ENCODE measurements at regions of chr17 and their contacts with region 1.

Region 1: DNA sequence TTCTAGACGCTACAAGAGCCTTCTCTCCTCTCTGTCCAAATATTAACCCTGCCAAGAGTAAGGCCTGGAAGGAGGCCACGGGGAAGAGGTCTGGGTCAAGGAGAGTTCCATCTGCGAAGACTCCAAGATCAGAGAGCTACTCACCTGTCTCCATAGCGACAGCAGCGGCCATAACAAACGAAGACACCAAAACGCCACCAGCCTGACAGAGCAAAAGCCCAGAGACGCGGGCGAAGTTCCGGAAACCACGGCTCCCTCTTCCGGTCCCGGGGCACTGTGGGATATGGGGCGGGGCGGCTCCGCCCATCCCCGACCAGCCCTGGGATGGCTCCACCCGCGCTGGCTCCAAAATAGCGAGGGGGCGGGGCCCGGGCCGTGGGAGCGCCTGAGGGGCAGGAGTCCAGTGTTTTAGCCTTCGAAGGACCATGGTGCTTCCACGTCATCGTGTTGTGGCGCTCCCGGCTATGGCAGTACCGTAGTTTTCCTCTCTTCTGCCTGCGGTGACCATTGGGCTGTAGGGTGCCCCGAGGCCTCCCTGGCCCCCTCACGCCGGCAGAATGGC is at the starts of genes C17orf100 and MED31:
- DNase-seq: peak; percentile 96
- H3K4me3 Mint-ChIP-seq: peak within 1 kb of the TSS; percentile 91
- H3K27ac Mint-ChIP-seq: peak within 1 kb of the TSS; percentile 95
- H3K4me1 Mint-ChIP-seq: peaks cover 65% of the 10 kb centered on the region
- H3K27me3 Mint-ChIP-seq: no peaks in the 10 kb centered on the region
- total RNA-seq, gene C17orf100: 1.1 to 1.9 TPM
- total RNA-seq, gene MED31: 26.0 to 26.3 TPM

Region 2: GRCh38 chr17:6473128-6473767 is 178.2 kb before region 1 on chr17:
- CTCF ChIA-PET with region 1: interaction called, 18 read pairs
- POLR2A ChIA-PET with region 1: no interaction called
- DNase-seq: peak; percentile 69
- H3K4me3 Mint-ChIP-seq: no peak overlapping the region
- H3K27ac Mint-ChIP-seq: no peak overlapping the region
- H3K4me1 Mint-ChIP-seq: no peaks in the 10 kb centered on the region
- H3K27me3 Mint-ChIP-seq: no peaks in the 10 kb centered on the region

Region 3: DNA sequence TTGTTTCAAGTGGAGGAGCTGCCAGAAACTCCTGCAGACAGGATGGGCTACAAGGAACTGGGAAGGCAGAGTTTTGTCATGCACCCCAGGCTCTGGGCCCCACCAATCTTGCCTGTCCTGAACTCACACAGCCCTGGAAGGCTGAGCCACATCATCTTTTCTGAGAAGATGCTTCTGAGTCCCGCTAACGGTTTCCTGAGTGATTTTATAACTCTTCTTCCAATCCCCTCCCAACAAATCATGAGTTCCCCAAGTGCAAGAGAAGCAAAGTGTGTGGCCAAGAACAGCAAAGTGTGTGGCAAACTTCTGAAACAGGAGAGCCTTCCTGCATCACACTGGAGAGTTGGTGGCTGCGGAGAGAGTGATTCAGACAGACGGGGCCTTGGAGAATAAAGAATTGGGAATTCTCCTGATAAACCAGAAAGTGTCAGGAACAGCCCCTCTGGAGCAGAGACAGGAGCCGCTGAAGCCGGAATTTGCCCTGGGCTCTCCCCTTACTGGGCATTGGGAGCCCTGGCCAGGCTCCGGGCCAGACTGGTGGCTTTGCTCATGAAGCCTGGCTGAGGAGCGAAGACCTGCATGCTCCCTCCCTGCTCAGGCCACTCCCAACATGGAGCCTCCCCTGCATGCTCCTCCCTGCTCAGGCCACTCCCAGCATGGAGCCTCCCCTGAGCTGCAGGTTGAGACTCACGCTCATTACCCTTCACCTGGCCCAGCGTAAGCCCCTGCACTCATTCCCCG is 142.2 kb before region 1 on chr17:
- CTCF ChIA-PET with region 1: no interaction called
- POLR2A ChIA-PET with region 1: no interaction called
- DNase-seq: no peak
- H3K4me3 Mint-ChIP-seq: no peak overlapping the region
- H3K27ac Mint-ChIP-seq: no peak overlapping the region
- H3K4me1 Mint-ChIP-seq: no peaks in the 10 kb centered on the region
- H3K27me3 Mint-ChIP-seq: peaks cover 7% of the 10 kb centered on the region